BJ (cell line): ENCODE measurements at regions of chr7 and their contacts with region 1.

Region 1: GRCh38 chr7:1044191-1045068 is at the start of gene GPR146:
- DNase-seq: peak; percentile 73
- H3K4me3 ChIP-seq: peak within 1 kb of the TSS; percentile 65
- H3K27me3 ChIP-seq: no peaks in the 10 kb centered on the region
- CTCF ChIP-seq: peak; percentile 80
- polyA plus RNA-seq, gene GPR146: 2.8 and 4.5 TPM in 2 replicates

Region 2: DNA sequence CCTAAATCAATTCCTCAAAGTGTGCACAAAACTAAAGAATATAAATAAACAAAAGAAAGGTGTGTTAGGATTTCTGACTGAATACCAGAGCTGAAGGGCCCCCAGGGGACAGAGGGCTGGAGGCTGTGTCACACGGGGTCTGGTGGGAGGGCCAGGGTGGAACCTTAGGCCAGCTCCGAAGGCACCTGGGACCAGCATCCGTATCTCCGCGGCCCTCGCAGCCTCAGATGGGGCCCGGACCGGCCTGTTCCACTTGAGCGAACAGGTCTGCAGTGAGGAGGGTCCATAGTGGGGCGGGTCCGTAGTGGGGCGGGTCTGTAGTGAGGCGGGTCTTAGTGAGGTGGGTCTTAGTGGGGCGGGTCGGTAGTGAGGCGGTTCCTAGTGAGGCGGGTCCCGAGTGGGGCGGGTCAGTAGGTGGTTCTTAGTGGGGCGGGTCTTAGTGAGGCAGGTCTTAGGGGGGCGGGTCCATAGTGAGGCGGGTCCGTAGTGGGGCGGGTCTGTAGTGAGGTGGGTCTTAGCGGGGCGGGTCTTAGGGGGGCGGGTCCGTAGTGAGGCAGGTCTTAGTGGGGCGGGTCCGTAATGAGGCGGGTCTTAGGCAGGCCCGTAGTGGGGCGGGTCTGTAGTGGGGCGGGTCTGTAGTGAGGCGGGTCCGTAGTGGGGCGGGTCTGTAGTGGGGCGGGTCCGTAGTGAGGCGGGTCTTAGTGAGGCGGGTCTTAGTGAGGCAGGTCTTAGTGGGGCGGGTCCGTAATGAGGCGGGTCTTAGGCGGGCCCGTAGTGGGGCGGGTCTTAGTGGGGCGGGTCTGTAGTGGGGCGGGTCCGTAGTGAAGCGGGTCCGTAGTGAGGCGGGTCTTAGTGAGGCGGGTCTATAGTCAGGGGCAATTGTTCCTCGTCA is 15.0 kb after region 1 on chr7:
- CTCF ChIA-PET with region 1: interaction called, 13 read pairs
- POLR2A ChIA-PET with region 1: no interaction called
- DNase-seq: no peak
- H3K4me3 ChIP-seq: no peak overlapping the region
- H3K27me3 ChIP-seq: no peaks in the 10 kb centered on the region
- CTCF ChIP-seq: no peak

Region 3: GRCh38 chr7:1076181-1077072 is 32.0 kb after region 1 on chr7:
- CTCF ChIA-PET with region 1: no interaction called
- POLR2A ChIA-PET with region 1: no interaction called
- DNase-seq: no peak
- H3K4me3 ChIP-seq: no peak overlapping the region
- H3K27me3 ChIP-seq: no peaks in the 10 kb centered on the region
- CTCF ChIP-seq: no peak